ENCODE measurements at regions of chr17 and their contacts with region 1.

Region 1: GRCh38 chr17:59619293-59620063 is at the start of gene CLTC:
- DNase-seq: peak; percentile 98
- total RNA-seq, gene CLTC: 250 to 254 TPM

Region 2: GRCh38 chr17:59234631-59235030 is 384.8 kb before region 1 on chr17:
- intact Hi-C with region 1: no loop called
- DNase-seq: no peak

Region 3: DNA sequence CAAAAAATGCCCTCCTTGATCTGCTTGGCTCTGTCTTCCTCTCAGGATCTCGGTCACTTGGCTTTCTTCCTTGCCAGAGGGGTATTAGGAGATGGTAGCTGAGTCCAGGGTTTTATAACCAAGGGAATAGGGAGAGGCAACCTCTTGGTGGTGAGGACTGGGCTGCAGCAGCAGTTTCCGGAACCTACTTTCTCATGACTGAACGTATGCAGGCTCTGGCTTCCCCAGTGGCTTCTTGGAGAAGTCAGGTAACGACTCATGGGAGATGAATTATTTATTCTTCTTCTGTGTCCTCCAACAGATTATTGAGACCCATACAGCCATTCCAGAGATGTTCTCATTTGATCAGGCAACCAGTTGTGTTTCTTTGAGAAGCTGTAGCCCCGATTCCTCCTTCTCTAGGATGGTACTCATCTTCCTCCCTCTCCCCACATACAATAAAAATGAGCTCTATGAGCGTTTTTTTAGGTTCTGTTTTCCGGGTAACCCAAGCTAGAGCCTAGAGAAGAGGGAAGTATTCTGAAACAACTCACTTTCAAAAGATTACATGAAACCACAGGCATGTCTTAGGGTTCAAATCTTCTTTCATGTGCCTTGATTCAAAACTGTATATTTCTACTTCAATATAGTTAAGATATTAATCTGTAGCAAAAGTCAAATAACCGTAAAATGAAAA is 76.4 kb before region 1 on chr17:
- intact Hi-C with region 1: loop called in 1 of 2 experiments (anchors 2 kb)
- DNase-seq: no peak

Region 4: GRCh38 chr17:59572301-59572928 is 47.1 kb before region 1 on chr17:
- intact Hi-C with region 1: no loop called
- DNase-seq: no peak